Aorta (tissue), 5 donors: ENCODE measurements at regions of chr19 and their contacts with region 1.

Region 1: DNA sequence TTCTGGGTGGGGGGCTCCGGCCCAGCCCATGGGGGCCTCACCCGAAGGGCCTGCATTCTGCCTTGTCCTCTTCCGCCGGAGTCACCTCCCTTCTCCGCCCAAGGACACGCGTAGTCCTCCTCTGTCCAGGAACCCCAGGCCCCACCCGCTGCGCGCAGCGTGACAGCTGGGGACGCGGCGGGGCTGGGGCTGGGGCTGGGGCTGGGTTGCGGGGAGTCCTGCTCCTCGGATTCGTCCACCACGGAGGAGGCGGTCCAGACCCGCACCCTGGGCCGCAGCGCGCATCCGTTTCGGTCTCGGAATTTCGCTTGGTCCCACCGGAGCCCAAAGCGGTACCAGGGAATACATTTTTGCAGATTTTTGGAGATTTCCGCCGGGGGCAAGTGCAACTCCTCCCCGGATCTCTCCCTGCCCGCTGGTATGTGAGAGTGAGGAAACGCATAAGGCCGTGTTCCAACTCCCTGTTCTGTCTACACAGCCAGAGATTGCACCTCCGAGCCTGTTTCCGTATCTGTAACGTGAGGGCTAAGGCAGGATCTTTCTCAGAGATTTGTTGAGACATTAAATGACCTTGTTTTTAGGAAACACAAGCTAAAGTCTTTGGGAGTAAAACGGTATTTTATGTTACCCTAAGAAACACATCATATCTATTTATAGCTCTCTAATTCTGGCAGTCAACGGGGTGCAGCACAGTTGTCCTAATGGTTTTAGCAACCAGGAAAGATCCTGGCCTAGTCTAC is at the start of gene COX7A1:
- DNase-seq: peak; percentile 80 to 91
- ATAC-seq: peak; percentile 95
- H3K4me3 ChIP-seq: peak within 1 kb of the TSS; percentile 57 to 72
- H3K27ac ChIP-seq: peak within 1 kb of the TSS; percentile 92
- H3K4me1 ChIP-seq: no peaks in the 10 kb centered on the region
- H3K27me3 ChIP-seq: no peaks in the 10 kb centered on the region
- total RNA-seq, gene COX7A1: 127 to 172 TPM

Region 2: DNA sequence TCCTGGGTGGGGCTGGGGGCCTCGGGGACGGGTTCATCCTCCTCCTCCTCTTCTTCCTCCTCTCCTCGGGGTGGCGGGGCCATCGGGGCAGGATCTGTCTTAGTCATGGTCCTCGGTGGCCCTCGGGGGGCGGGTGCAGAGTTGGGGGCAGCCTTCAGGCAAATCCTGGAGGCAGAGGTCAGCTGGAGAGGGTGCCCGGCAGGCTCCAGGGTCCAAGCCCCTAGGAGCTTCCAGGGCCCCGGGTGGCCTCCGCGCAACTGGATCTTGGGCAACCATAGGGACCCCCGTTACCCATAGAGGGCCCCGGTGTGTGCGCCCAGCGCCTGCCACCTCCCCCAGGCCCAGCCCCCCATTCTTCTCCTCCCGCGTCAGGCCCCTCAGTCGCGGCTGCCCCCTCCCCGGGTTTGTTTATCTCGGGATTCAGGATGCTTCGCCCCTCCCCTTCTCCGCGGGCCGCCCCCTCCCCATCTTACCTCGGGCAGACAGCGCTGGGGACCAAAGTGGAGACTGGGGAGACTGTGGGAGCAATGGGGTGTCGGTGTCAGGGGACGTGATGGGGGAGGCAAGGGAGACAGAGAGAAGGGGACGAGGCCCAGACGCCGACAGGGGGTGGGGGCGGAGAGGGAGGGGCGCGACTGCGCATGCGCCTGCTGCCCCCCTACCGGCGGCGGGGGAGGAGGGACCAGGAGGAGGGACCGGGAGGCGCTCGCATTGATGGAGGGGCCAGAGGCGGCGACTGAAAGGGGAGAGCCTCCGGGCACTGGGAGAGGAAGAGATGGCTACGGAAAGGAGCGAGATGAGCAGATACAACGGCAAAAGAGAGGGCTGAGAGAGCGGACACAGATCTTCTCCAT is 120.0 kb before region 1 on chr19 and contains the start of gene CLIP3:
- intact Hi-C with region 1: no loop called
- DNase-seq: peak; percentile 83 to 93
- ATAC-seq: peak; percentile 90
- H3K4me3 ChIP-seq: peak within 1 kb of the TSS; percentile 80 to 94
- H3K27ac ChIP-seq: peak within 1 kb of the TSS in 1 of 2 donors; percentile 22
- H3K4me1 ChIP-seq: no peaks in the 10 kb centered on the region
- H3K27me3 ChIP-seq: no peaks in the 10 kb centered on the region
- total RNA-seq, gene CLIP3: 35.1 to 37.1 TPM

Region 3: GRCh38 chr19:36132489-36132891 is 20.0 kb before region 1 on chr19:
- intact Hi-C with region 1: loop called in 1 of 2 experiments (anchors 2 kb)
- DNase-seq: no peak
- ATAC-seq: no peak
- H3K4me3 ChIP-seq: no peak overlapping the region
- H3K27ac ChIP-seq: no peak overlapping the region
- H3K4me1 ChIP-seq: no peaks in the 10 kb centered on the region
- H3K27me3 ChIP-seq: no peaks in the 10 kb centered on the region

Region 4: GRCh38 chr19:36139473-36140303 is 12.8 kb before region 1 on chr19 and contains the start of gene CAPNS1:
- intact Hi-C with region 1: loop called in 1 of 2 experiments (anchors 1 kb)
- DNase-seq: peak; percentile 99
- ATAC-seq: peak; percentile 97
- H3K4me3 ChIP-seq: peak within 1 kb of the TSS; percentile 76 to 91
- H3K27ac ChIP-seq: peak within 1 kb of the TSS; percentile 30 to 97
- H3K4me1 ChIP-seq: no peaks in the 10 kb centered on the region
- H3K27me3 ChIP-seq: no peaks in the 10 kb centered on the region
- total RNA-seq, gene CAPNS1: 521 to 538 TPM